IMR-90 (cell line): ENCODE measurements at regions of chr6 and their contacts with region 1.

Region 1: DNA sequence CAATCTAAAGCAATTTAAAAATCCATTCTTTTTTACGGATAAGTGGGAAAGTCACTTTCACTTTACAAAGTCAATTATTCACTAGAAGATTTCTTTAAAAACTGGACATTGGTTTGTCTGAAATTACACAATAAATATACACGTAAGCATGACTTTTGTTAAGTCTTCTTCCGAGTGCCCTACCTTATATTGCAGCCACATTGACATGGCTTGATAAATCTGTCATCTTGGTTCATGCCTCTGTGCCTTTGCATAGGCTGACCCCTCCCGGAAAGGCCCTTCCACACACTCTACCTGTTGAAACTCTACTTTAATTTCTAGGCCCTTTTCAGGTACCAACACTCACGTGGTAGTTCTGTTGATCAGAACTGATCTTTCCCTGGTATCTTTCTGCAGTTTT is 104.1 kb downstream of the SH3BGRL2 start:
- DNase-seq: no peak
- ATAC-seq: no peak
- H3K4me3 ChIP-seq: no peak overlapping the region
- H3K27ac ChIP-seq: no peak overlapping the region
- H3K4me1 ChIP-seq: no peaks in the 10 kb centered on the region
- H3K27me3 ChIP-seq: peaks cover 2% of the 10 kb centered on the region; the same call in 1 of the 2 replicates
- CTCF ChIP-seq: no peak
- POLR2A ChIP-seq: no peak
- RAD21 ChIP-seq: no peak

Region 2: GRCh38 chr6:79269877-79270276 is 465.3 kb before region 1 on chr6:
- CTCF ChIA-PET with region 1: interaction called, 13 read pairs
- POLR2A ChIA-PET with region 1: no interaction called
- dilution Hi-C with region 1: no loop called
- in situ Hi-C with region 1: no loop called
- intact Hi-C with region 1: no loop called
- DNase-seq: peak; percentile 43
- ATAC-seq: peak; percentile 76
- H3K4me3 ChIP-seq: no peak overlapping the region
- H3K27ac ChIP-seq: no peak overlapping the region
- H3K4me1 ChIP-seq: no peaks in the 10 kb centered on the region
- H3K27me3 ChIP-seq: no peaks in the 10 kb centered on the region
- CTCF ChIP-seq: no peak
- POLR2A ChIP-seq: no peak
- RAD21 ChIP-seq: no peak

Region 3: GRCh38 chr6:79750806-79751205 is 15.6 kb after region 1 on chr6:
- CTCF ChIA-PET with region 1: no interaction called
- POLR2A ChIA-PET with region 1: no interaction called
- dilution Hi-C with region 1: no loop called
- in situ Hi-C with region 1: no loop called
- intact Hi-C with region 1: no loop called
- DNase-seq: no peak
- ATAC-seq: no peak
- H3K4me3 ChIP-seq: no peak overlapping the region
- H3K27ac ChIP-seq: no peak overlapping the region
- H3K4me1 ChIP-seq: no peaks in the 10 kb centered on the region
- H3K27me3 ChIP-seq: no peaks in the 10 kb centered on the region
- CTCF ChIP-seq: no peak
- POLR2A ChIP-seq: no peak
- RAD21 ChIP-seq: no peak